Heart right ventricle (tissue), 16 donors: ENCODE measurements at regions of chr11 and their contacts with region 1.

Region 1: DNA sequence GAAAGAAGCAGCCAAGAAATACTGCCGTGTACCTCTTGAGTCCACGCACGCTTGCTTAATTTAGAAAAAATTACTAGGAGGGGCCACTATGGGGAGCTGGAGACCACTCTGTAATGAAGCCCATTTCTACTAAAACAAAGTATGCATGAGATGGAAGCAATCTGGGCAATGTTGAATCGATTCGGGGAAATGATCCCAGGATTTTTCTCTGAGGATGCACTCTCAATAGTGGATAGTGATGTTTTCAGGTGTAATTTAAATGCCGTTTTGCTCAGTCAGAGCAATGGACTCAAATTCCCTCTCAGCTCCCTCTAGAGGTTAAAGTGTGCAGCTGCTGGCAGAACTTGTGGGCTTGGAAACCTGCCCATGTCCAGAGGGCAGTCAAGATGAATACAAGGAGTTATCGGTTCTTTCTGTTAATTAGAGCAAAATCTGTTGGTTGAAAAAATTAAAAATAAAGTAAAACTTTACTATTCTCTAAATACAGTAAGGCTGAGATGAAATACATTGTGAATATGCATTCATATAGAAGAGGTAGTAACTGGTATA is 64.1 kb downstream of the ME3 start:
- DNase-seq: peak; percentile 68 to 73
- ATAC-seq: peak; percentile 72 to 90 (median 86)
- H3K4me3 ChIP-seq: peak overlapping the region in 4 of 10 donors; percentile 4 to 22 (median 15)
- H3K27ac ChIP-seq: peak overlapping the region in 2 of 10 donors; percentile 13 to 15
- H3K4me1 ChIP-seq: peaks cover 6 to 41% (median 26%) of the 10 kb centered on the region in 9 donors
- H3K27me3 ChIP-seq: no peaks in the 10 kb centered on the region
- CTCF ChIP-seq: peak; percentile 84 to 98 (median 94)

Region 2: GRCh38 chr11:86551286-86552092 is 56.8 kb before region 1 on chr11:
- intact Hi-C with region 1: loop called in 1 of 10 experiments (anchors 5 kb)
- DNase-seq: peak in 1 of 2 donors; percentile 40
- ATAC-seq: peak in 7 of 8 donors; percentile 34 to 71 (median 66)
- H3K4me3 ChIP-seq: no peak overlapping the region
- H3K27ac ChIP-seq: peak overlapping the region; percentile 26 to 84 (median 70)
- H3K4me1 ChIP-seq: peaks cover 7 to 61% (median 33%) of the 10 kb centered on the region in 9 donors
- H3K27me3 ChIP-seq: no peaks in the 10 kb centered on the region
- CTCF ChIP-seq: no peak

Region 3: GRCh38 chr11:86592659-86593451 is 15.5 kb before region 1 on chr11:
- intact Hi-C with region 1: no loop called
- DNase-seq: peak in 1 of 2 donors; percentile 58
- ATAC-seq: peak in 7 of 8 donors; percentile 11 to 76 (median 50)
- H3K4me3 ChIP-seq: no peak overlapping the region
- H3K27ac ChIP-seq: peak overlapping the region in 1 of 10 donors; percentile 17
- H3K4me1 ChIP-seq: peaks cover 9 to 64% (median 38%) of the 10 kb centered on the region in 9 donors
- H3K27me3 ChIP-seq: no peaks in the 10 kb centered on the region
- CTCF ChIP-seq: no peak

Region 4: GRCh38 chr11:86671682-86672621 is 63.6 kb after region 1 on chr11 and contains the start of gene ME3:
- intact Hi-C with region 1: loop called in 1 of 10 experiments (anchors 5 kb)
- DNase-seq: peak; percentile 72 to 73
- ATAC-seq: peak; percentile 80 to 89 (median 86)
- H3K4me3 ChIP-seq: peak within 1 kb of the TSS; percentile 48 to 88 (median 82)
- H3K27ac ChIP-seq: peak within 1 kb of the TSS; percentile 74 to 97 (median 94)
- H3K4me1 ChIP-seq: peaks cover 3 to 62% (median 16%) of the 10 kb centered on the region in 9 donors
- H3K27me3 ChIP-seq: peaks cover 0 to 9% (median 0%) of the 10 kb centered on the region in 7 donors
- CTCF ChIP-seq: peak in 1 of 9 donors; percentile 10
- total RNA-seq, gene ME3: 17.4 to 39.8 (median 33.7) TPM

Region 5: DNA sequence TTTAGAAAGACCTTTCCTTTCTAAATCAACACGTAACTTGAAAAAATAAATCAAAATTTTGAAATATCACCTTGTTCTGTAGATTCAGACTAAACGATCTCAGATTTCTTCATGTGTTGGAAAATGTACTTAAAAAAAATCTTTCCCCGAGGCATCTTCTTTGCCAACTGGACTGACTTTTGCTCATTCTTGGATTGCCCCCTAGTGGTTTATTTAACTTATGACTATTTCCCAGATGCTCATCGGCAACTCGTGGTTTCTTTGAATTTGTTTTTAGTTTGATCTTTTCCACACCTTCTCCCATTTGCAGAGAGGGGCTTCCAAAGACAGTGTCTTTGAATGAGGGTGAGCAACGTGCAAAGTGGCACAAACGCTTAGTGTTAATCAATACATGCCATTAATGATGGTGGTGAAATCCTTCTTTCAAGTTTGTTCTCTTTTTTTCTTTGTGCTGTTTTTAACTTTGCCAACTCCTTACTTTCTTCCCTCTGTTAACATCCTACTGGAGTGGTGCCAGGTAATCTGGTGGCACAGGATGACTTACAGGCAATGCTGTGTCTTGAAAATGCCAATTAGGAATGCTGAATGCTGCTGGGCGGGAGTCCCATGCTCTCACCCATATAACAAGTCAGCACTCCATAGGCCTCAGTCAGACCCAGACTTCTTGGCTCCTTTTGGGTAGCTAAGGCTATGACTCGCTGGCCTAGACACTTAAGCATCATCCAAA is 210.3 kb after region 1 on chr11:
- intact Hi-C with region 1: loop called in 8 of 10 experiments (anchors 5 to 10 kb)
- DNase-seq: peak in 1 of 2 donors; percentile 20
- ATAC-seq: peak in 7 of 8 donors; percentile 35 to 63 (median 45)
- H3K4me3 ChIP-seq: no peak overlapping the region
- H3K27ac ChIP-seq: no peak overlapping the region
- H3K4me1 ChIP-seq: peaks cover 0 to 44% (median 10%) of the 10 kb centered on the region in 9 donors
- H3K27me3 ChIP-seq: no peaks in the 10 kb centered on the region
- CTCF ChIP-seq: peak; percentile 59 to 88 (median 80)